HepG2 (cell line): ENCODE measurements at regions of chr17 and their contacts with region 1.

Region 1: GRCh38 chr17:81666342-81667191 is at the starts of genes CCDC137 and OXLD1:
- DNase-seq: peak; percentile 94
- ATAC-seq: peak; percentile 97
- H3K4me3 ChIP-seq: peak within 1 kb of the TSS; percentile 86 to 98 (median 96)
- H3K27ac ChIP-seq: peak within 1 kb of the TSS; percentile 81
- H3K4me1 ChIP-seq: peaks cover 27% of the 10 kb centered on the region
- H3K27me3 ChIP-seq: no peaks in the 10 kb centered on the region; a peak in 1 of 5 replicates
- CTCF ChIP-seq: no peak
- EP300 ChIP-seq: no peak; a peak in 1 of 4 replicates
- POLR2A ChIP-seq: peak; percentile 97
- RAD21 ChIP-seq: peak; percentile 56
- total RNA-seq, gene CCDC137: 34.4 and 39.1 TPM in 2 replicates
- total RNA-seq, gene OXLD1: 34.9 and 37.5 TPM in 2 replicates

Region 2: GRCh38 chr17:81621494-81622130 is 45.0 kb before region 1 on chr17:
- CTCF ChIA-PET with region 1: no interaction called
- POLR2A ChIA-PET with region 1: no interaction called
- in situ Hi-C with region 1: no loop called
- intact Hi-C with region 1: no loop called
- DNase-seq: no peak
- ATAC-seq: peak; percentile 31; the same call in 1 of the 3 replicates
- H3K4me3 ChIP-seq: no peak overlapping the region
- H3K27ac ChIP-seq: no peak overlapping the region
- H3K4me1 ChIP-seq: no peaks in the 10 kb centered on the region
- H3K27me3 ChIP-seq: no peaks in the 10 kb centered on the region
- CTCF ChIP-seq: no peak
- EP300 ChIP-seq: no peak
- POLR2A ChIP-seq: no peak
- RAD21 ChIP-seq: no peak

Region 3: GRCh38 chr17:81636505-81637288 is 29.9 kb before region 1 on chr17 and contains the starts of genes NPLOC4 and TSPAN10:
- CTCF ChIA-PET with region 1: no interaction called
- POLR2A ChIA-PET with region 1: interaction called, 15 read pairs
- in situ Hi-C with region 1: no loop called
- intact Hi-C with region 1: loop called (anchors 2 kb)
- DNase-seq: peak; percentile 71
- ATAC-seq: peak; percentile 83
- H3K4me3 ChIP-seq: peak within 1 kb of the TSS; percentile 73 to 89 (median 80)
- H3K27ac ChIP-seq: peak within 1 kb of the TSS; percentile 87
- H3K4me1 ChIP-seq: peaks cover 36% of the 10 kb centered on the region
- H3K27me3 ChIP-seq: no peaks in the 10 kb centered on the region; a peak in 1 of 5 replicates
- CTCF ChIP-seq: peak; percentile 26; the same call in 1 of the 2 replicates
- EP300 ChIP-seq: peak; percentile 65 to 73; a peak in 2 of 4 replicates
- POLR2A ChIP-seq: peak; percentile 64 to 81
- RAD21 ChIP-seq: peak; percentile 77
- total RNA-seq, gene NPLOC4: 57.0 and 64.7 TPM in 2 replicates
- total RNA-seq, gene TSPAN10: 0.27 and 0.75 TPM in 2 replicates

Region 4: GRCh38 chr17:81683584-81684237 is 17.1 kb after region 1 on chr17 and contains the starts of genes ARL16 and HGS:
- CTCF ChIA-PET with region 1: no interaction called
- POLR2A ChIA-PET with region 1: interaction called, 68 read pairs
- in situ Hi-C with region 1: no loop called
- intact Hi-C with region 1: no loop called
- DNase-seq: peak; percentile 99
- ATAC-seq: peak; percentile 92
- H3K4me3 ChIP-seq: peak within 1 kb of the TSS; percentile 94 to 99 (median 97)
- H3K27ac ChIP-seq: peak within 1 kb of the TSS; percentile 68
- H3K4me1 ChIP-seq: peaks cover 43% of the 10 kb centered on the region
- H3K27me3 ChIP-seq: no peaks in the 10 kb centered on the region; a peak in 1 of 5 replicates
- CTCF ChIP-seq: no peak
- EP300 ChIP-seq: no peak
- POLR2A ChIP-seq: peak; percentile 70 to 76
- RAD21 ChIP-seq: peak; percentile 64
- total RNA-seq, gene ARL16: 18.8 and 20.8 TPM in 2 replicates
- total RNA-seq, gene HGS: 54.1 and 73.3 TPM in 2 replicates

Region 5: GRCh38 chr17:81702971-81703746 is 36.6 kb after region 1 on chr17 and contains the start of gene MRPL12:
- CTCF ChIA-PET with region 1: no interaction called
- POLR2A ChIA-PET with region 1: interaction called, 54 read pairs
- in situ Hi-C with region 1: no loop called
- intact Hi-C with region 1: loop called (anchors 5 kb)
- DNase-seq: peak; percentile 91
- ATAC-seq: peak; percentile 82
- H3K4me3 ChIP-seq: peak within 1 kb of the TSS; percentile 92 to 93 (median 92)
- H3K27ac ChIP-seq: peak within 1 kb of the TSS; percentile 93
- H3K4me1 ChIP-seq: peaks cover 33% of the 10 kb centered on the region
- H3K27me3 ChIP-seq: no peaks in the 10 kb centered on the region; a peak in 1 of 5 replicates
- CTCF ChIP-seq: peak; percentile 69
- EP300 ChIP-seq: 0 out of 4 replicates have a peak, but pooled peaks of 1 of the 2 experiments have one; percentile 37
- POLR2A ChIP-seq: peak in 1 of 2 experiments; percentile 96; a peak in 2 of 4 replicates
- RAD21 ChIP-seq: peak; percentile 47
- total RNA-seq, gene MRPL12: 39.1 and 72.5 TPM in 2 replicates

Region 6: GRCh38 chr17:81711814-81712467 is 45.4 kb after region 1 on chr17 and contains the start of gene SLC25A10:
- CTCF ChIA-PET with region 1: no interaction called
- POLR2A ChIA-PET with region 1: interaction called, 14 read pairs
- in situ Hi-C with region 1: no loop called
- intact Hi-C with region 1: no loop called
- DNase-seq: peak; percentile 89
- ATAC-seq: peak; percentile 56
- H3K4me3 ChIP-seq: peak within 1 kb of the TSS; percentile 87 to 95 (median 92)
- H3K27ac ChIP-seq: peak within 1 kb of the TSS; percentile 93
- H3K4me1 ChIP-seq: peaks cover 32% of the 10 kb centered on the region
- H3K27me3 ChIP-seq: no peaks in the 10 kb centered on the region; a peak in 1 of 5 replicates
- CTCF ChIP-seq: no peak; the same call in 1 of the 2 replicates
- EP300 ChIP-seq: peak; percentile 41 to 88; a peak in 2 of 4 replicates
- POLR2A ChIP-seq: peak in 1 of 2 experiments; percentile 45; a peak in 1 of 4 replicates
- RAD21 ChIP-seq: peak; percentile 79
- total RNA-seq, gene SLC25A10: 111 and 140 TPM in 2 replicates